Activated CD4-positive, alpha-beta T cell treated with anti-CD3 and anti-CD28 coated beads for 36 hours (primary cell): ENCODE measurements at regions of chr5 and their contacts with region 1.

Region 1: DNA sequence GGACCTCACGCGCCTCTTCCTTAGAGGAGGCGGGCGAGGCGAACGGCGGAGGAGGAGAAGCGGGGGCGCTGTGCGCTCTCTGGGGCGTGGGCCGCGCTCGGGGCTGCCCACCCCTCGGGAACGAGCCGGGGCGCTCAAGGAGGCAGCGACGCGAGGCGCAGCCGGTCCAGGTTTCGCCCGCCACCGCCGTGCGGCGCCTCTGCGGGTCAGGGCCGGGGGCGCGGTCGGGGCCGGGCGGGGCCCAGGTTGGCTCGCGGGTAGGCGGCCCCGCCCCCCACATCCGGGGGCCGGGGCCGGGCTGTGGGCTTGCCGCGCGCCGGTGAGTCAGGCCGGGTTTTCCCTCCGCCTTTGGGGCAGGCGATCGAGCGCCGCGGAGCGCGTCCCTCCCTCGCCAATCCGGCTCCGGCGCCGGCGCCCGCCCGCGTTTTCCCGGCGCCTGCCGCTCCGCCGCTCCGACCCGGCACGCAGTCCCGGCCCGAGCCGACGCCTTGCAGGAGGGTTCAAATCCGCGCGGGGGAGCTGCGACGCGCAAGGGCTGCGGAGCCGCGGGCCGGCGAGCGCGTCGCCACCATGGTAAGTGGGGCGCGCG is at the start of gene N4BP3:
- DNase-seq: peak; percentile 92
- ATAC-seq: peak; percentile 83
- H3K4me3 Mint-ChIP-seq: peak within 1 kb of the TSS; percentile 88
- H3K27ac Mint-ChIP-seq: peak within 1 kb of the TSS; percentile 73
- H3K4me1 Mint-ChIP-seq: peaks cover 36% of the 10 kb centered on the region
- H3K27me3 Mint-ChIP-seq: peaks cover 6% of the 10 kb centered on the region
- total RNA-seq, gene N4BP3: 3.3 to 3.7 TPM

Region 2: GRCh38 chr5:178130604-178131485 is 17.6 kb after region 1 on chr5 and contains the start of gene RMND5B:
- CTCF ChIA-PET with region 1: interaction called, 3 read pairs
- POLR2A ChIA-PET with region 1: no interaction called
- intact Hi-C with region 1: loop called in 1 of 2 experiments (anchors 1 kb)
- DNase-seq: peak; percentile 90
- ATAC-seq: peak; percentile 89
- H3K4me3 Mint-ChIP-seq: peak within 1 kb of the TSS; percentile 80
- H3K27ac Mint-ChIP-seq: peak within 1 kb of the TSS; percentile 90
- H3K4me1 Mint-ChIP-seq: peaks cover 25% of the 10 kb centered on the region
- H3K27me3 Mint-ChIP-seq: no peaks in the 10 kb centered on the region
- total RNA-seq, gene RMND5B: 24.1 to 28.7 TPM

Region 3: DNA sequence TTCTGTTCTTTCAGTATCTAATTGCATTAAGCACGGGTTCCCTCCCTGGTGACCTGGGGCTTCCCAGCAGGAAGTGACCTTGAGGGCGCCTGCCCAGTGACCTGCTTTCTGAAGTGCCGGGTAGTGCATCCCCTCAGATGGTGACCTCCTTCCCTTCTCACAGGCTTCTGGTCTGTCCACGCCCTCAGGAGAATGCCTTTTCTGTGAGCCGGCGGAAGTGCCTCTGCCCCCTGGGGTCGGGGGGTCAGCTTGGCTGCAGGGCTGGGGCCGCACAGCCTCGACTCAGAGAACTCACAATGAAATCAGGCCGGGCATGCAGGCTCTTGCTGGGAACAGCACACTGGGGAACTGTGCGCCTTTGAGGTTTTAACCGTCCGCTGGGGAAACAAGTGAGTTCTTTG is 243.8 kb after region 1 on chr5:
- CTCF ChIA-PET with region 1: no interaction called
- POLR2A ChIA-PET with region 1: no interaction called
- intact Hi-C with region 1: no loop called
- DNase-seq: no peak
- ATAC-seq: no peak
- H3K4me3 Mint-ChIP-seq: no peak overlapping the region
- H3K27ac Mint-ChIP-seq: no peak overlapping the region
- H3K4me1 Mint-ChIP-seq: no peaks in the 10 kb centered on the region
- H3K27me3 Mint-ChIP-seq: peaks cover 14% of the 10 kb centered on the region